BJ (cell line): ENCODE measurements at regions of chr7 and their contacts with region 1.

Region 1: DNA sequence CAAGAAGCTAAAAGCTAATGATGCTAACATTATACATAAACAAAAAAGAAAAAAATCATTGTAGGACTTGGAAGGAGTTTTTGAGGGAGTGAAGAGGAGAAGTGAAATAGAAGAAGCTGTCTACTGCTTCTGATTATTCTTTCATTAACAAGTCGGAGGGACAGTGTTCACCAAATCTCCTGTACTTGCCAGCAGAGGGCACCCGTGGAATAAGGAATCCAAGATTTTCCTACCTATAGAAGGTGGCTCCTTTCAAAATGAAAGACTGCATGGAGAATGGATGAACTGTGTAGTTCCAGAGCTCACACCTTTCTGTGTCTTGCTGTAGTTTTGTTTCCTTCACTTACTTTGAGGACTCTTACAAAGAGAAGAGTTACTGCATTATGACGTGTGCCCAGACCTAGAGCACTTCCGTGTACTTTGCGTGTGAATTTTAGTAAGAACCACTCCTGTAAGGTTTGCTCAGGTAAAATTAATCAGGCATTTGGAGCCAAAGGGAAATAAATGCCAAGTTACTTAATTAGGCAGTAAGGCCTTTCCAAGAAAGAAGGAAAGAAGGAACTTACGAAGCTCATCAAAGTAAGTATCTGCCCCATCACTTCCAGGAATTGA is 145.1 kb downstream of the SEMA3D start:
- DNase-seq: peak; percentile 22
- H3K4me3 ChIP-seq: no peak overlapping the region
- H3K27me3 ChIP-seq: no peaks in the 10 kb centered on the region
- CTCF ChIP-seq: peak; percentile 72

Region 2: DNA sequence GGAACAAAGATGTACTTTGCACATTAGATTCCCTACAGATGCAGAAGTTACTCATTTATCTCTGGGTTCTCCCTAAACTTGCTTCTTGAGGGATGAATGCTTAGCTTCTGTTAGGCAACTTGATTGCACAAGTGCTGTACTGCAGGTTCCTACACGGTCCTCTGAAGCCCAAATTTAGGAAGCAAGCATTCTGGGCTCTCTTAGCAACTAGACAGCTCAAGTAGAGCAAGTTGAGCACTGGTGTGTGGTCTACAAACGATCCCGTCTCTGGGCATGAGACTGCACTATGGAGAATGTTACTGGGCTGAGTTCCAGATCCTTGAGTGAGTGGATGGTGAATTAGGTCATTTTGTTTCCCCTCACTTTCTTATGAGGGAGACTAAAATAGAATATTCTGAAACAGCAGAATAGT is 130.8 kb after region 1 on chr7:
- CTCF ChIA-PET with region 1: interaction called, 11 read pairs
- POLR2A ChIA-PET with region 1: no interaction called
- DNase-seq: peak; percentile 62
- H3K4me3 ChIP-seq: no peak overlapping the region
- H3K27me3 ChIP-seq: no peaks in the 10 kb centered on the region
- CTCF ChIP-seq: no peak

Region 3: GRCh38 chr7:85186521-85187241 is 145.0 kb after region 1 on chr7 and contains the start of gene SEMA3D:
- CTCF ChIA-PET with region 1: interaction called, 149 read pairs
- POLR2A ChIA-PET with region 1: no interaction called
- DNase-seq: no peak
- H3K4me3 ChIP-seq: peak within 1 kb of the TSS; percentile 78
- H3K27me3 ChIP-seq: no peaks in the 10 kb centered on the region
- CTCF ChIP-seq: peak; percentile 84
- polyA plus RNA-seq, gene SEMA3D: 19.9 and 27.7 TPM in 2 replicates

Region 4: DNA sequence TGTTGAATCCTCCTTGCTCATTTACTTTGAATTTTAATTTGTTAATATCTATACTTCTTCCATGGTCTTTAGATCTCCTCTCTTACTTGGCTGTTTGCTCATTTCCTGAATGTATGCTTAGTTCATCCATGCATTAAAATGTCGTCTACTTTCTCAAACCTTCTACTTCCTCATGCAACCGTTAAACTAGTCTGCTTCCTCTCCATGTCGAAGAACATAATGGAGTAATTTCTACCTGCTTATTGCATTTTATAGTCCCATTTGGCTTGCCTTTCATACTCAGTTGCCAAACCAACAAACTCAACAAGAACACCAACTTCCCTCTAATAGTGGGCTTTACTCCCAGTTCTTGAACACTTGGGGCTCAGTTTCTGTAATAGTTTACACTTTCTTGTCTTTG is 188.9 kb after region 1 on chr7:
- CTCF ChIA-PET with region 1: no interaction called
- POLR2A ChIA-PET with region 1: no interaction called
- DNase-seq: no peak
- H3K4me3 ChIP-seq: no peak overlapping the region
- H3K27me3 ChIP-seq: no peaks in the 10 kb centered on the region
- CTCF ChIP-seq: no peak

Region 5: DNA sequence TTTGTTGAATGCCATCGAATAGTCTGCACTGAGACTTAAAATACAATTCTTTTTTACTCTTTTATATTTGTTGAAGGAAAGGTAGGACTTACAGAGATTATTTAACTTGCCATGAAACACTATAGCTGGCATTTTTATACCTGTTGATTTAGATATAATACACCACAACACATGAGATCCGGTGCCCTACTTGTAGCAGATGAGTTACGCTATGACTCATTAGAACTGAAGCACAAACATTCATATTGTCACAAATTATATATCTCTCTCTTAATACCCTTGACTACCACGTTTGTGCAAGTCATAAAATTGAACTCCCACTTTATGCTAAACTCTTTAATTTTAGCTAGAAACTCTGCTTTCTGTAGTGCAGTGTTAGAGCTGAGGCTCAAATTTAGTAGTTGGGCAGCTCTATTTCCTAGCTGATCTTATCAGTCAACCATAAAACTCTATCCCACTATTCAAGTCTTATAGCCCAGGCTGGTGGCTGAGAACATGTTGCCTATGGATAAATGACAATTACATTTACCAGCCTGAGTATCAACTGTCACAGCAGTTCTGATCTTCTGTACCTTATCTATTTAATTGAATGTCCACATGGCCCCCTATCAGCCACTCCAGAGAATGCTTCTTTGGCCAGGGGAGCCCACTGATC is 282.6 kb after region 1 on chr7:
- CTCF ChIA-PET with region 1: no interaction called
- POLR2A ChIA-PET with region 1: no interaction called
- DNase-seq: no peak
- H3K4me3 ChIP-seq: no peak overlapping the region
- H3K27me3 ChIP-seq: no peaks in the 10 kb centered on the region
- CTCF ChIP-seq: no peak

Region 6: DNA sequence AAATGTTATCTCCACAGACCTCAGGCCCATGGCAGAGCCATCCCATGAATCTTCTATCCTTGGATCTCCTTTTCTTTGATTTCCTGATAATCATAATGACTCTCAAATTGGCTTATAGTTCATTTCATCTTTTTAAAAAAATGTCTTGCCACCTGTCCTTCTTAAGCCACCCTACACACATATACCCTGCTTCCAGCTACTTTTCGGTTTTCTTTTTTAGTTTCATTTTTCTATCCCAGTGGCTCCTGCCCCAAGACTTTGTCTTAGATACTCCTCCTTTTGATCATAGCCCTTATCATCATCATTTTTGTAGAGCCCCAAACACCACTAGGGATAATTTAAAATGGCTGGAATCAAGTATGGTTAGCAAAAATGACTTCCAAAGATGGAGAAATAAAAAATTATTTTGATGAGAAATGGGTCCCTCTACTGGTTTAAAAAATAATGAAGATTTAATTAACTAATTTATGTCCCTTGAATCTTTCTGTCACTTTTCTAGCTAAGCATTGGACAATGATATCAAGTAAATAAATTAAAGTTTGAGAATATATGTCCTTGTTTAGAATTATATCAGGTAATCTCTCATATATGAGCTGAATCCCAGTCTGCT is 422.4 kb after region 1 on chr7:
- CTCF ChIA-PET with region 1: interaction called, 21 read pairs
- POLR2A ChIA-PET with region 1: no interaction called
- DNase-seq: no peak
- H3K4me3 ChIP-seq: no peak overlapping the region
- H3K27me3 ChIP-seq: no peaks in the 10 kb centered on the region
- CTCF ChIP-seq: no peak; the same call in 1 of the 2 replicates

Region 7: GRCh38 chr7:85554236-85555178 is 512.8 kb after region 1 on chr7:
- CTCF ChIA-PET with region 1: interaction called, 19 read pairs
- POLR2A ChIA-PET with region 1: no interaction called
- DNase-seq: peak; percentile 31
- H3K4me3 ChIP-seq: no peak overlapping the region
- H3K27me3 ChIP-seq: no peaks in the 10 kb centered on the region
- CTCF ChIP-seq: peak; percentile 65

Region 8: GRCh38 chr7:85750454-85750949 is 708.8 kb after region 1 on chr7:
- CTCF ChIA-PET with region 1: interaction called, 17 read pairs
- POLR2A ChIA-PET with region 1: no interaction called
- DNase-seq: no peak
- H3K4me3 ChIP-seq: no peak overlapping the region
- H3K27me3 ChIP-seq: peaks cover 1% of the 10 kb centered on the region; the same call in 1 of the 2 replicates
- CTCF ChIP-seq: peak; percentile 80

Region 9: DNA sequence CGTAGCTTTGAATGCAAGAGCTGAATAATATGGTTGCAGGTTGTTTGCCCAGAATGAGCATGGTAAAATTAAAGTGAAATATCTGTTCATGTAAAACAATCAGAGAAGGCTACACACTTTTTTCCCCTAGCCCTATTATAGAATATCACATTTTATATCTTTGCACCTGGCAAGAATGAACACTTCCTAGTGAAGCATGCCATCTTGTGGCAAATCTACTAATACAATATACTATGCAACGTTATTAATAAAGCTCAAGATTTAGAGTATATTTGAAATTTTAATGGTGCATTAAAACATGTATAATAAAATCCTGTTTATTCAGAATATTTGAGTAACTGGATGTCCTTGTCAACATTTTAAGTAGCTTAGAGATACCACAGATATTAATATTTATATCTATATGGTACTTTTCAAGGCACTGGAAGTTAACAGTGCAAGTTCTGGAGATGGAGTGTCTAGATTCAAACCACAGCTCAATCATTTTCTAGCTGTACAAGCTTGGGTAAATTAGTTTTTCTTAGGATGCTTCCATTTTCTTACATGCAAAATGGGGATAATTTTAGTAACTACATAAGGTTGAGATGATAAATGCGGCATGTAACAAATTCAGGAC is 788.2 kb after region 1 on chr7:
- CTCF ChIA-PET with region 1: interaction called, 10 read pairs
- POLR2A ChIA-PET with region 1: no interaction called
- DNase-seq: no peak
- H3K4me3 ChIP-seq: no peak overlapping the region
- H3K27me3 ChIP-seq: no peaks in the 10 kb centered on the region
- CTCF ChIP-seq: peak; percentile 38; the same call in 1 of the 2 replicates